ENCODE measurements at regions of chr11 and their contacts with region 1.

Region 1: DNA sequence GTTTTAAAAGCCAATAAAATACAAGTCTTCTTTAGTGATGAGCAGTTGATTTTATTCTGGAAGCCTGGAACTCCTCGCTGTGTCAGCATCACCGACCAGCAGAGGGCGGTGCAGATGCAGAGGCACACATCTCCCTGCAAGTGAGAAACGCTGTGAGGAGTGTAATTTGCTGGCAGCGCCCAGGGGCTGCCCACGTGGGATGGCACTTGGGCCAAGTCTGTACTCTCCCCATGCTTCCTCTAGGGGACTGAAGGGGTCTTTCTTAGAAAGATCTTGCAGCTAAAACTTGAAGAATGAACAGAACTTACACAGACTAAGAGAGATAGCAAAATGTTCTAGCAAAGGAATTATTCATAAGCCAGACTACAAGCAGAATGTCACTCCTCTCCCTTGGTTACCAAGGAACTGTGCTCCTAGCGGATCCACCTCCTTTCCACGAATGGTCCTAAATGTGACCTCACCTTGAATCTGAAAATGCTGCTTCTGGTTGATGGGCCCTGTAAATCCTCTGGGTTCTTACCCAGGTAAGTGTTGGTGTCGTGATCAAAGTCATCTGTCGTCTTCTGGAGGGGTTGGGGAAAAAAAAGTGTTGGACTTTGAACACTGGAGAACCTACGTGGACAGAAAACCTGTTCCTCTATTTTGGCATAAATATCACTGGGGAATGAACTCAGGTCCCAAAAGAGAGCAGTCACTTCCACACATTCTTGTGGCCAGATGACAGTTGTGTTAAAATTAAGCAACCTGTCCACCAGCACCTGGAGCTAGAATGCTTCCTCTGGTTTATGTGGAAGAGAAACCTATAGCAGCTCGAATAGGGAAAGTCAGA is 31.8 kb downstream of the CNTF start:
- DNase-seq: peak; percentile 75 to 82
- H3K4me3 ChIP-seq: no peak overlapping the region
- H3K4me3 Mint-ChIP-seq: no peak overlapping the region
- H3K27ac Mint-ChIP-seq: no peak overlapping the region
- H3K4me1 ChIP-seq: peaks cover 13% of the 10 kb centered on the region; the same call in 1 of the 2 replicates
- H3K4me1 Mint-ChIP-seq: peaks cover 23% of the 10 kb centered on the region
- H3K27me3 ChIP-seq: no peaks in the 10 kb centered on the region
- H3K27me3 Mint-ChIP-seq: no peaks in the 10 kb centered on the region
- CTCF ChIP-seq: peak; percentile 88 to 97

Region 2: DNA sequence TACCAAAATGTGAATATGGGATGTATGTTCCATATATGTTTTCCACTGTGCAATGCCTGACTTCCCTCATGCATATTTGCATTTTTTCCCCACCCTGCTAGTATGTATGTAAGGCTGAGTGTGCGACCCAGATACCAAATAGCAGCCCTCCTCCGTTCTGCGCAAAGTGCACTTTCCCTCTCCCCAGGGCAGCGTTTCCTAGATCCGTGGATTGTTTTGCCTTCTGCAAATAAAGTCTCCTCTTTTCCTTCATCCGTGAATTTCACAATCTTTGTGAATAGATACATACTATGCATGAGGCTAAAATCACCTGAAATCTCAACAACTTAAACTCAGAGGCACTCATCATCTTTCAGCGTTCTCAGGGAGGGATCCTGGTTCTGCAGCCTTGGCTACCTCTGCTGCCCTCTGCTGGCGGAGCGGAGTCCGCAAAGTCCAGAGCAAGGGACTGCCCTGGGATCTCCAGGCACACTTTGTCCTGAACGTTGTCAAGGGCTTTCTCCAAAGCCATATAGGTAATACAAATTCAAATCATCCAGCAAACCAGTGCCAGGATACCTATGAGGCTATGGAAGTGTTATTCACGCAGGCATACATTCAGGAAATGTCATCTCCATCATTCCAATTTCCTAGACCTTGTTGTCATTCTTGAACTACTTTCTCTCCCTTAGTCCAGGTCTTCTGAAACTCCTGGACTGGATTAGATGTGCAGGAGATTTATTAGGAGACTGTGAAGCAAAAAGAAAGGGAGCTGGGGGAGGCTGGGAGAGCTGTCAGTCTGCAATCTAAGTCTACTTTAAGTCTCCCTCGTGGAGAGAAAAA is 21.3 kb after region 1 on chr11:
- CTCF ChIA-PET with region 1: interaction called, 3 read pairs
- POLR2A ChIA-PET with region 1: no interaction called
- intact Hi-C with region 1: loop called (anchors 1 kb)
- DNase-seq: peak; percentile 78 to 85
- H3K4me3 ChIP-seq: no peak overlapping the region
- H3K4me3 Mint-ChIP-seq: no peak overlapping the region
- H3K27ac Mint-ChIP-seq: no peak overlapping the region
- H3K4me1 ChIP-seq: no peaks in the 10 kb centered on the region
- H3K4me1 Mint-ChIP-seq: no peaks in the 10 kb centered on the region
- H3K27me3 ChIP-seq: no peaks in the 10 kb centered on the region
- H3K27me3 Mint-ChIP-seq: no peaks in the 10 kb centered on the region
- CTCF ChIP-seq: peak; percentile 92 to 98

Region 3: GRCh38 chr11:58719406-58720117 is 65.3 kb after region 1 on chr11:
- CTCF ChIA-PET with region 1: no interaction called
- POLR2A ChIA-PET with region 1: no interaction called
- intact Hi-C with region 1: loop called (anchors 10 kb)
- DNase-seq: no peak
- H3K4me3 ChIP-seq: no peak overlapping the region
- H3K4me3 Mint-ChIP-seq: no peak overlapping the region
- H3K27ac Mint-ChIP-seq: no peak overlapping the region
- H3K4me1 ChIP-seq: no peaks in the 10 kb centered on the region
- H3K4me1 Mint-ChIP-seq: no peaks in the 10 kb centered on the region
- H3K27me3 ChIP-seq: no peaks in the 10 kb centered on the region
- H3K27me3 Mint-ChIP-seq: no peaks in the 10 kb centered on the region
- CTCF ChIP-seq: no peak

Region 4: GRCh38 chr11:58762284-58763119 is 108.2 kb after region 1 on chr11:
- CTCF ChIA-PET with region 1: no interaction called
- POLR2A ChIA-PET with region 1: no interaction called
- intact Hi-C with region 1: no loop called
- DNase-seq: peak; percentile 65 to 82
- H3K4me3 ChIP-seq: no peak overlapping the region
- H3K4me3 Mint-ChIP-seq: peak overlapping the region; percentile 47
- H3K27ac Mint-ChIP-seq: peak overlapping the region; percentile 50
- H3K4me1 ChIP-seq: peaks cover 16% of the 10 kb centered on the region
- H3K4me1 Mint-ChIP-seq: peaks cover 13% of the 10 kb centered on the region
- H3K27me3 ChIP-seq: no peaks in the 10 kb centered on the region
- H3K27me3 Mint-ChIP-seq: no peaks in the 10 kb centered on the region
- CTCF ChIP-seq: no peak